ENCODE measurements at regions of chr10 and their contacts with region 1.

Region 1: DNA sequence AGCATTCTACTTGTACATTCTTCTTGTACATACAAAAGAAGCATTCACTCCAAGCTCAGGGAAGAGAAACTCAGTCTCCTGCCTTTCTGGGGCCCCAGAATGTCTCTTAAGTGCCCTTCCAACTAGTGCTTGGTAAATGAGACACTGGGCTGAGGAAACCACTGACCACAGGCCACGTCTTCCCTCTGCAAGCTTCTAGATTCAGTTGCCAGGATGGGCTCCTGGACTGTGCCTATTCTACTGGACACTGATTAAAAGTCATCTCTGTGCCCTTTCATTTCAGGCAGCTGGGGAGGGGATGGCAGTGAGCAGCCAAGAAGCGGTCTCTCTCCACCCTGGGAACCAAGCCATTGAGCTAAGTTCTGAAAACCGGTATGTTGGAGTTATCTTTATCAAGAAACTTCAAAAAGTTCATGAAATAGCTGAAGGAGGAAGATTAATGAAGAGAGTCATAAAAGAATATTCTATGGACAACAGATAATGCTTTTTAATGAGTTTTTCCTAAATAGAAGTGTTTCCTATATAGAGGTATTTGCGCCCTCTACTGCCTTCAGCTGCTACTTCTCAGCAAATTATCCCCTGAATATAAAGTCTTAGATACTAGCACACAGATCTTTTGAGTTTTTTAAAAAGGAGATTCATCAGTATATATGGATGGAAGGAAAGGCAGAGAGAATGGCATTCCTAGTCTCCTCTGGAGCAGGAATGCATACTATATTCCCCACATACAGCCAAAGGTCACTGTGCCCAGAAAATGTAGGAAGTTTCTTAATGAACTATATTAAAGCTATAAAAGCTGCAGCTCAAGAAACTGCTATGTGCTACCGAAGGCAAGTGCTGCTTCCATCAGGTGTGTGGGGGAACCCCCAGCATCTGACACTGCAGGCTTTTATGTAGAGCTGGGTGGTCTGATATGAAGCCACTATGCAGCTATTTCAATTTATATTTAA is 8.4 kb upstream of the IFIT1B start:
- DNase-seq: peak; percentile 60
- ATAC-seq: peak; percentile 49
- H3K4me3 ChIP-seq: no peak overlapping the region
- H3K27ac ChIP-seq: no peak overlapping the region
- H3K4me1 ChIP-seq: peaks cover 3% of the 10 kb centered on the region
- H3K27me3 ChIP-seq: no peaks in the 10 kb centered on the region
- CTCF ChIP-seq: peak; percentile 76
- POLR2A ChIP-seq: no peak
- RAD21 ChIP-seq: peak; percentile 77

Region 2: GRCh38 chr10:88687853-88688467 is 681.5 kb before region 1 on chr10:
- CTCF ChIA-PET with region 1: no interaction called
- POLR2A ChIA-PET with region 1: no interaction called
- dilution Hi-C with region 1: no loop called
- in situ Hi-C with region 1: no loop called
- intact Hi-C with region 1: no loop called
- DNase-seq: peak; percentile 24
- ATAC-seq: peak; percentile 72; the same call in 1 of the 2 replicates
- H3K4me3 ChIP-seq: no peak overlapping the region
- H3K27ac ChIP-seq: no peak overlapping the region
- H3K4me1 ChIP-seq: no peaks in the 10 kb centered on the region
- H3K27me3 ChIP-seq: no peaks in the 10 kb centered on the region; the same call in 1 of the 2 replicates
- CTCF ChIP-seq: peak; percentile 75
- POLR2A ChIP-seq: no peak
- RAD21 ChIP-seq: peak; percentile 69

Region 3: GRCh38 chr10:89022734-89023133 is 346.7 kb before region 1 on chr10:
- CTCF ChIA-PET with region 1: no interaction called
- POLR2A ChIA-PET with region 1: interaction called, 23 read pairs
- dilution Hi-C with region 1: no loop called
- in situ Hi-C with region 1: no loop called
- intact Hi-C with region 1: no loop called
- DNase-seq: no peak
- ATAC-seq: no peak
- H3K4me3 ChIP-seq: no peak overlapping the region
- H3K27ac ChIP-seq: no peak overlapping the region
- H3K4me1 ChIP-seq: peaks cover 2% of the 10 kb centered on the region; the same call in 1 of the 2 replicates
- H3K27me3 ChIP-seq: no peaks in the 10 kb centered on the region
- CTCF ChIP-seq: no peak
- POLR2A ChIP-seq: no peak
- RAD21 ChIP-seq: no peak

Region 4: GRCh38 chr10:89296220-89296648 is 73.2 kb before region 1 on chr10:
- CTCF ChIA-PET with region 1: interaction called, 4 read pairs
- POLR2A ChIA-PET with region 1: no interaction called
- dilution Hi-C with region 1: no loop called
- in situ Hi-C with region 1: no loop called
- intact Hi-C with region 1: loop called (anchors 2 kb)
- DNase-seq: peak; percentile 79
- ATAC-seq: peak; percentile 56
- H3K4me3 ChIP-seq: no peak overlapping the region
- H3K27ac ChIP-seq: peak overlapping the region; percentile 87
- H3K4me1 ChIP-seq: peaks cover 6% of the 10 kb centered on the region
- H3K27me3 ChIP-seq: no peaks in the 10 kb centered on the region
- CTCF ChIP-seq: no peak
- POLR2A ChIP-seq: no peak
- RAD21 ChIP-seq: no peak

Region 5: DNA sequence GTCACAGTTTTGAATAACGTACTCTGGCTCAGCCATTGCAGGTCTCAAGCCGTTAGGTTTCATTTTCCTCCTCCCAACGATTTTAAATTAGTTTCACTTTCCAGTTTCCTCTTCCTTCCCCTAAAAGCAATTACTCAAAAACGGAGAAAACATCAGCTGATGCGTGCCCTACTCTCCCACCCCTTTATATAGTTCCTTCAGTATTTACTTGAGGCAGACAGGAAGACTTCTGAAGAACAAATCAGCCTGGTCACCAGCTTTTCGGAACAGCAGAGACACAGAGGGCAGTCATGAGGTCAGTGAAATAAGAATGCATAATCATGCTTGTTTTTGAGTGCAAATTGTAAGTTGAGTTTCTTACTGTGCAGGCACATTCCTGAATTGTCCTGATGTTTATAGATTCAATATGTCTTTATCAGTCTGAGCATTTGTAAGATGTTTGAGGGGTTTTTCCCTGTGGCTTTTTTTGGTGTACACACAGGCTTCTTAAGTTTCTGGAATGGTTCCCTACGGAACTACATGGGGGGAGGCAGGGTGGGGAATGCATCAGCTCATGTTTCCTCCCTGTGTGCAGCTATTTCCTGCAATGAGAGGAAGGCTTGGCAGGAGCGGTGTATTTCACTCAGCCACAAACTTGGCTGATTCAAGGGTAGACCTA is 41.5 kb before region 1 on chr10 and contains the start of gene IFIT3:
- CTCF ChIA-PET with region 1: no interaction called
- POLR2A ChIA-PET with region 1: no interaction called
- dilution Hi-C with region 1: no loop called
- in situ Hi-C with region 1: no loop called
- intact Hi-C with region 1: loop called (anchors 5 kb)
- DNase-seq: peak; percentile 96
- ATAC-seq: peak; percentile 92
- H3K4me3 ChIP-seq: peak within 1 kb of the TSS; percentile 54
- H3K27ac ChIP-seq: peak within 1 kb of the TSS; percentile 88
- H3K4me1 ChIP-seq: peaks cover 7% of the 10 kb centered on the region
- H3K27me3 ChIP-seq: no peaks in the 10 kb centered on the region
- CTCF ChIP-seq: no peak
- POLR2A ChIP-seq: no peak
- RAD21 ChIP-seq: no peak
- total RNA-seq, gene IFIT3: 7.3 and 7.8 TPM in 2 replicates

Region 6: GRCh38 chr10:89414146-89414878 is 44.9 kb after region 1 on chr10 and contains the start of gene IFIT5:
- CTCF ChIA-PET with region 1: interaction called, 5 read pairs
- POLR2A ChIA-PET with region 1: no interaction called
- dilution Hi-C with region 1: no loop called
- in situ Hi-C with region 1: no loop called
- intact Hi-C with region 1: loop called (anchors 2 kb)
- DNase-seq: peak; percentile 67
- ATAC-seq: peak; percentile 92
- H3K4me3 ChIP-seq: peak within 1 kb of the TSS; percentile 88
- H3K27ac ChIP-seq: peak within 1 kb of the TSS; percentile 91
- H3K4me1 ChIP-seq: peaks cover 4% of the 10 kb centered on the region
- H3K27me3 ChIP-seq: no peaks in the 10 kb centered on the region
- CTCF ChIP-seq: no peak
- POLR2A ChIP-seq: no peak; the same call in 1 of the 2 replicates
- RAD21 ChIP-seq: peak; percentile 21; the same call in 1 of the 2 replicates
- total RNA-seq, gene IFIT5: 18.1 and 21.7 TPM in 2 replicates

Region 7: DNA sequence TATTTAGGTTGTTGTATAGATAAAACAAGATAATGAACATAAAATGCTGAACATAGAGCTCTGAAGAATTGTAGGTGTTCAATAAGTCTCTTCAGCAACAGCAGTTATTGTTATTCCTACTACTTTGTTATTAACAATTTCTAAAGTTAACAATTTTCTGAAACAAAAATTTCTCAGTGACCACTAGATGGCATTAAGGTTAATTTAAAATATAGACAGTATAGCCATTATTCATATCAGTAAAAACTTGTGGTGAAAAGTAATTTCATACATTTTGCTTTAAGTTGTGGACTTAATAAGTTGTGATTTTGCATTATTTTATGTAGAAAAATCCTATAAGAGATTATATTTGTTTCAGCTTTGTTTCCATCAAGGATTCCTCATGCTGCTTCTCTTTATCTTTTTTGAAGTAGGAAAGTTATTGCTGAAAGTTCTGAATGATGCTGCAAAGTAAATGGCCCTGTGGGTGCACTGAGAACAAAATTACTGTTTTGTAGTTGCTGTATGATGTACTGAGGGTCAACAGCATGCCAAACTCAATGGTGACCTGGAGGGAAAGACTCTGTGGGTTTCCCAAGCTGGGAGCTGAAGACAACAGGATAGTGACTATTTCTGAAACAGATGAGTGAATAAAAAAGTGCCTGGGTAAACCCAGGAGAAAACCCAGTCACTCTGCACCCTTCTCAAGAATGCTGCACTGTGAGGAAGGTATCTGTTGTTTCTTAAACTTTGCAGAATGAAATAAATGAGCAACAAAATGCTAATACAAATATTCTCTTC is 585.5 kb after region 1 on chr10:
- CTCF ChIA-PET with region 1: no interaction called
- POLR2A ChIA-PET with region 1: no interaction called
- dilution Hi-C with region 1: no loop called
- in situ Hi-C with region 1: no loop called
- intact Hi-C with region 1: no loop called
- DNase-seq: no peak
- ATAC-seq: no peak
- H3K4me3 ChIP-seq: no peak overlapping the region
- H3K27ac ChIP-seq: no peak overlapping the region
- H3K4me1 ChIP-seq: no peaks in the 10 kb centered on the region
- H3K27me3 ChIP-seq: no peaks in the 10 kb centered on the region
- CTCF ChIP-seq: peak; percentile 38; the same call in 1 of the 2 replicates
- POLR2A ChIP-seq: no peak
- RAD21 ChIP-seq: no peak

Measured in IMR-90 (cell line).